Common myeloid progenitor, CD34-positive (primary cell): ENCODE measurements at regions of chr21 and their contacts with region 1.

Region 1: GRCh38 chr21:42117229-42117966 is 46.3 kb downstream of the UMODL1 start:
- DNase-seq: peak; percentile 86 to 90 (median 86)
- H3K4me3 ChIP-seq: peak overlapping the region in 1 of 7 experiments; percentile 66
- H3K27ac ChIP-seq: peak overlapping the region; percentile 96 to 97
- H3K4me1 ChIP-seq: peaks cover 29 to 89% (median 82%) of the 10 kb centered on the region in 4 experiments
- H3K27me3 ChIP-seq: no peaks in the 10 kb centered on the region

Region 2: GRCh38 chr21:41816220-41817165 is 300.9 kb before region 1 on chr21:
- CTCF ChIA-PET with region 1: interaction called, 11 read pairs
- POLR2A ChIA-PET with region 1: no interaction called
- DNase-seq: peak; percentile 59 to 67 (median 66)
- H3K4me3 ChIP-seq: peak overlapping the region in 1 of 7 experiments; percentile 4
- H3K27ac ChIP-seq: no peak overlapping the region
- H3K4me1 ChIP-seq: peaks cover 0 to 5% (median 4%) of the 10 kb centered on the region in 4 experiments
- H3K27me3 ChIP-seq: no peaks in the 10 kb centered on the region

Region 3: GRCh38 chr21:41923631-41924367 is 193.6 kb before region 1 on chr21:
- CTCF ChIA-PET with region 1: interaction called, 12 read pairs
- POLR2A ChIA-PET with region 1: interaction called, 9 read pairs
- DNase-seq: peak; percentile 59 to 92 (median 88)
- H3K4me3 ChIP-seq: peak overlapping the region in 4 of 7 experiments; percentile 16 to 57 (median 43)
- H3K27ac ChIP-seq: peak overlapping the region; percentile 30 to 37
- H3K4me1 ChIP-seq: peaks cover 31 to 89% (median 86%) of the 10 kb centered on the region in 4 experiments
- H3K27me3 ChIP-seq: no peaks in the 10 kb centered on the region

Region 4: GRCh38 chr21:41933313-41934086 is 183.9 kb before region 1 on chr21:
- CTCF ChIA-PET with region 1: interaction called, 17 read pairs
- POLR2A ChIA-PET with region 1: interaction called, 13 read pairs
- DNase-seq: peak in 2 of 3 donors; percentile 75 to 84
- H3K4me3 ChIP-seq: peak overlapping the region in 5 of 7 experiments; percentile 2 to 54 (median 46)
- H3K27ac ChIP-seq: peak overlapping the region; percentile 29 to 72
- H3K4me1 ChIP-seq: peaks cover 19 to 59% (median 52%) of the 10 kb centered on the region in 4 experiments
- H3K27me3 ChIP-seq: no peaks in the 10 kb centered on the region

Region 5: GRCh38 chr21:42009831-42010523 is 107.4 kb before region 1 on chr21 and contains the start of gene ZBTB21:
- CTCF ChIA-PET with region 1: interaction called, 23 read pairs
- POLR2A ChIA-PET with region 1: interaction called, 23 read pairs
- DNase-seq: peak; percentile 97 to 98 (median 97)
- H3K4me3 ChIP-seq: peak within 1 kb of the TSS; percentile 72 to 88 (median 81)
- H3K27ac ChIP-seq: peak within 1 kb of the TSS; percentile 91 to 95
- H3K4me1 ChIP-seq: peaks cover 0 to 23% (median 15%) of the 10 kb centered on the region in 4 experiments
- H3K27me3 ChIP-seq: no peaks in the 10 kb centered on the region

Region 6: DNA sequence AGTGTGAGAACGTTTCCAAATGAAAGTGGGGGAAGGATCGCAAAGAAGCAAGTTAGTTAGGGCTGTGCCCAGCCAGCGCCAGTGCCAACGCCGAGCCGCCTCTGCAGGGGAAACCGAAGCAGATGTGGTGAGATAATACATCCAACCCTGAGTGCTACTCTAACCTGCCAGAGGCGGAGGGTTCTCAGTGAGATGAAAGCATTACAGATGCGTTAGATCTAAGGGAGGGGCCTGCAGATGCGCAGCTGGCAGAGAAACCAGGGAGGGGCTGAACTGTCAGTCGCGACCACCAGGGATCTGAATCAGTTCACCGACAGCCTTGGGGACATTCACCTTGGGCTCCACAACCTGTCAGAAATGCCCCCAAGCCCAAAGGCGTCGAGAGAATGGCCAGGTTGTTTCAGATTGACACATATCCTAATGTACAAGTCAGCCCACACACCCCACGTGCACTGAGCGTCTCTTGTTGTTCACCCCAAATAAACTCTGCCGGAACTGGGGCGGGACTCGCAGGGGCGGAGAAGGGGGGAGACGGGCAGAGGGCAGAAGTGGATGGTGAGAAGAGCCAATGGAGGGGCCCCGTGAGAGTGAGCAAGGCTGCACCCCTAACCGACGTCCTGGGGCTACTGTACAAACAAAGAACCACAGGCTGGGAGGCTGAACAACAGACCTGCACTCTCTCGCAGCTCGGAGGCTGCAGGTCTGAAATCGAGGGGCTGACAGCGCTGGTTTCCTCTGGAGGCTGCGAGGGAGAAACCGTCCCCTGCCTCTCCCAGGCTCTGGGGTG is 55.0 kb before region 1 on chr21:
- CTCF ChIA-PET with region 1: interaction called, 10 read pairs
- POLR2A ChIA-PET with region 1: interaction called, 24 read pairs
- DNase-seq: peak; percentile 93 to 99 (median 97)
- H3K4me3 ChIP-seq: peak overlapping the region in 6 of 7 experiments; percentile 34 to 76 (median 51)
- H3K27ac ChIP-seq: peak overlapping the region; percentile 73 to 87
- H3K4me1 ChIP-seq: peaks cover 12 to 63% (median 62%) of the 10 kb centered on the region in 4 experiments
- H3K27me3 ChIP-seq: no peaks in the 10 kb centered on the region

Region 7: DNA sequence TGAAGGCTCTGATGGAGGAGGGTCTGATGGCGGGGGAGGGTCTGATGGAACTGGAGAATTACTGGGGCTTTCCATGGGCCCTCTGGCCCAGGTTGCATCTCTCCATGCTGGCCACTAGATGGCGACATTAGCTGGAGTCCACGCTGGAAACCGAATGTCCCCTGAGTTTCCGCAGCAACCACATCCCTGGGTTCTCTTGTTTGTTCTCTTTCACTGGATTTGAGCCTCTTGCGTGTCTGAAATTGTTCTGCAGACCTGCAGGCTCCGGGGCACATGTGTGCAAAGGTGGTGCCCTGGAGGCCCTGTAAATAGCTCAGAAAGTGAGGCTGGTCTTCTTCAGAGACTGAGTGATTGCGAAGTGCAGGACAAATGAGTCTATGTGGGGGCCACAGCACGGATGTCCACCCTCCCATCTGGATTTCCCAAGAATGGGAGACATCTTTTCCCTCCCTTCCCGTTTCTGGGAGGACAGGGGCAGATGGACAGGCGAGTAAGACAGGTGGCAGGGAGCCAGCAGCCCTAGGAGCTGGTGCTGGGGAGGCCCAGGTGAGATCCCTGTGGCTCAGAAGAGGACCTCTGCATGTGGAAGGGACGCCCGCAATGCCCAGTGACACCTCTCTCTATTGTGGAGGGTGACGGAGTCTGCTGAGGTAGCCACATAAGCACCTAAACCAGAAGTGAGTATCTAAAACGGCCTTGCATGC is 28.3 kb after region 1 on chr21:
- CTCF ChIA-PET with region 1: interaction called, 11 read pairs
- POLR2A ChIA-PET with region 1: no interaction called
- DNase-seq: peak; percentile 68 to 86 (median 82)
- H3K4me3 ChIP-seq: no peak overlapping the region
- H3K27ac ChIP-seq: no peak overlapping the region
- H3K4me1 ChIP-seq: peaks cover 0 to 15% (median 9%) of the 10 kb centered on the region in 4 experiments
- H3K27me3 ChIP-seq: no peaks in the 10 kb centered on the region